ENCODE measurements at regions of chr7 and their contacts with region 1.

Region 1: DNA sequence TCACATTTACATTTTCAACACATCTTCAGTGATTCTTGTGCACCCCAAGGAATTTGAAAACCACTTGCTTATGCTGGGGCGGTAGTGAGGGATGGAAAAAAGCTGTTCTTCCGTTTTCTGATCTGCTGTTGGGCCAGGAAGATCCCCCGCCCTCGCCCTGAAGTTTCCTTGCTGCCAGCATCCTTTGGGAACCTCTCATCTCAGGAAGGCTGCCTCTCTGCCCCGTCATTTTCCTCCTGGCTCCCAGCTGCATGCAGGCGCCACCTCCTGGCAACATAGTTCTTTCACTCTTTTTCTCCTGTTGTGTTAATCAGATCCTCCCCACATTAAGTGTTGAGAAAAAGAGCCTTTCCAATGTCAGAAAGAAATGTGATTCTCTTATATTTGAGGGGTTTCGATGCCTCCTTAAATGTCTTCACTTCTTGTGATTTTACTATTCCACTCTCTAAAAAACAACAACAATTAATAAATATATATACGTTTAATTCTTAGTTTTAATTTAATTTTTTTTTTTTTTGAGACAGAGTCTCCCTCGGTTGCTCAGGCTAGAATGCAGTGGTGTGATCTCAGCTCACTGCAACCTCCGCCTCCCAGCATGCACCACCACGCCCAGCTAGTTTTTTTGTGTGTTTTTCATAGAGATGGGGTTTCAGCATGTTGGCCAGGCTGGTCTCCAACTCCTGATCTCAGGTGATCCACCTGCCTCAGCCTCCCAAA is 122.9 kb downstream of the RALA start:
- DNase-seq: peak; percentile 74 to 87
- ATAC-seq: peak; percentile 85 to 92; a peak in 5 of 6 replicates
- H3K4me3 ChIP-seq: no peak overlapping the region
- H3K27ac ChIP-seq: no peak overlapping the region
- H3K4me1 ChIP-seq: peaks cover 10% of the 10 kb centered on the region
- CTCF ChIP-seq: peak; percentile 82
- EP300 ChIP-seq: no peak
- POLR2A ChIP-seq: no peak
- RAD21 ChIP-seq: peak; percentile 80 to 86

Region 2: DNA sequence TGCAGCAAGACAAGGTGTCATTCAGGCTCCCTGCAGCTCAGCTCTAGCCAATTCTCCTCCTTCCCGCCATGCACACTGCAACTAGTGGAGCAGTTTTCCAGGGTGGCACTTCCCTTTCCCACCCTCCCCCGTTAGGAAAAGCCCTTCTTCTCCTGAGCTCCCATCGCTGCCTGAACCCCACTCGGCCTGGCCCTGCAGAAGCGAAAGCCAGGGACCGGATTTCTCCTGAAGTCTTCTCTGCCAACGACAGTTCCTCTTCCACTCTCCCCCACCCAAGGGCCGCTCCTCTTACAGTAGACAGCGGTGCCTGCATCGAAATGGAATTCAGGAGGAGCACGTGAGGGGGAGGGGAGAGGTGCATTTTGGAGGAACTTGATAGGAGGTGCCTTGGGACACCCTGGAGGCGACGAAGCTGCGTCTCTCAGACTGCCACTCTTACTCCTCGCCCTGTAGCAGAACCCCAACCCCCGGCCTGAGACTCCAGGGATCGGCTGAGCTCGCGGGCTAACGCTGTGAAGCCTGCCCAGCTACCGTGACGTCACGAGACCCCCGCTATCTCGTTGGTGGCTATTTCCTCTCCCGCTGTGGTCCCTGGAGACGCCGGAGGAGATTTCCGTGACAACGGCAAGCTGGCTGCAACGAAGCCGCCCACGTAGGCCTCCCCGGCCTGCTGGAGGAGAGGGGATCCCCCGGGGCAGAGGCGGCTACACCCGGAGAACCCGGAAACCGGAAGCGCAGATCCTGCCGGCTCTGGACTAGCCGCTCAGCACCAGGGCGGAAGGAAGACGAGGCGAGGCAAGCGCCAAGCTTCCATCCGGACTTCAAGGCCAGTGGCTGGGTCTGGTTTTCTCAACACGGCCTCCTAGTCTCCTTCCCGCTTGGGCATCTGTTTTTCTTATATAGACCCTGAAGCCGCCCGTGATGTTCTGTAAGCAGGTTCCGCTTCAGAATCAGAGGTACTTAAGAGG is 13.1 kb before region 1 on chr7:
- CTCF ChIA-PET with region 1: interaction called, 30 read pairs
- POLR2A ChIA-PET with region 1: no interaction called
- DNase-seq: peak; percentile 90 to 91
- ATAC-seq: peak; percentile 97 to 98
- H3K4me3 ChIP-seq: peak overlapping the region; percentile 57
- H3K27ac ChIP-seq: peak overlapping the region; percentile 73 to 84
- H3K4me1 ChIP-seq: peaks cover 15% of the 10 kb centered on the region
- CTCF ChIP-seq: no peak
- EP300 ChIP-seq: no peak
- POLR2A ChIP-seq: peak; percentile 66
- RAD21 ChIP-seq: no peak

Region 3: GRCh38 chr7:39758234-39758970 is 12.1 kb after region 1 on chr7:
- CTCF ChIA-PET with region 1: interaction called, 16 read pairs
- POLR2A ChIA-PET with region 1: no interaction called
- DNase-seq: no peak
- ATAC-seq: no peak
- H3K4me3 ChIP-seq: no peak overlapping the region
- H3K27ac ChIP-seq: no peak overlapping the region
- H3K4me1 ChIP-seq: peaks cover 8% of the 10 kb centered on the region; the same call in 2 of the 3 replicates
- CTCF ChIP-seq: no peak
- EP300 ChIP-seq: no peak
- POLR2A ChIP-seq: no peak
- RAD21 ChIP-seq: no peak

Measured in A549 (cell line).